ENCODE measurements at regions of chr21 and their contacts with region 1.

Region 1: GRCh38 chr21:27693376-27693775 is 726.5 kb upstream of the ADAMTS5 start:
- DNase-seq: peak; percentile 98
- H3K4me3 ChIP-seq: no peak overlapping the region
- H3K27ac ChIP-seq: peak overlapping the region; percentile 98
- H3K4me1 ChIP-seq: peaks cover 18% of the 10 kb centered on the region
- H3K27me3 ChIP-seq: no peaks in the 10 kb centered on the region
- CTCF ChIP-seq: no peak

Region 2: DNA sequence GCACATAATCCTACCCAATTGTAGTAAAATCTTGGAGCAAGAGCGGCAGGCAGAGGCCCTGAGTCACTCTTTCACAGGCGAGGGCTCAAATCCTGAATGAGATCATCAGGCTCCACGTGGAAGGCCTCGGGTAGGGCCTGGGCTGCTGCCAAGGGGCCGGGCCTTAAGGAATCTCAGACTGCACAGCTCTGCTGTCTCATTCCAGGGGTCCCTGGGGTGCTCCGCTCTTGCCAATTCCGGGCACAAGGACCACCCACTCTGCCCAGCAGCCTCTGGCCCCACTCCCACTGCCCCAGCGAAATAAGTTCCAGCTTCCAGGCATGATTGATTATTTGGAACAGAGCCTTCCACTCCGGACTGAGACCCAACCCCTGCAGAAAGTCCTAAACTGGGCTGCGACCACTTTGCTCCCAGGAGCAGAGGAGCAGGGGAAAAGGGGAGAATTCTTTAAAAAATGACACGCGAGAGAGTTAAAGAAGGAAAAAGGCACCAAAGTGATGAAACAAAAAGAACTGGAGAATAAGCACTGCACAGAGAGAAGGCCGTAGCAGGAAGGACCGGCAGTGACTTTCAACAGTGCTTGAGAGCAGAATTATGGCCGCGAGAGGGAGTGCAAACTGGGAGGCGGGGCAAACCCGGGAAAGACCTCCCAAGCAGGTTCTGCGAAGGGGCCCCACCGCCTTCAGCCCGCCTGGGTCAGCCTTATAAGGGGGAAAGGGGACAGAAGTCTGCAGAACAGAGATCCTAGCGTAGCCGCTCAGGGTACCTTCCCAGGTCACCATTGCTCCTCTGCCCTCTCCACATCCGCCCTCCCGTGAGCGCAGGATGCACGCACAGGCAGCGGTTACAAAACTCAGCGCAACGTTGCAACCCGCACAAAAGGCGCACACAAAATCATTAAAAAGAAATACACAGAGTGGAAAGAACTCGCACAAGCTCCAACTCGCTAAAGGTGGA is 850.1 kb before region 1 on chr21:
- CTCF ChIA-PET with region 1: no interaction called
- dilution Hi-C with region 1: loop called (anchors 5 kb)
- in situ Hi-C with region 1: no loop called
- intact Hi-C with region 1: no loop called
- DNase-seq: peak; percentile 91
- H3K4me3 ChIP-seq: peak overlapping the region; percentile 70 to 85 (median 74)
- H3K27ac ChIP-seq: peak overlapping the region; percentile 80
- H3K4me1 ChIP-seq: peaks cover 27% of the 10 kb centered on the region
- H3K27me3 ChIP-seq: no peaks in the 10 kb centered on the region
- CTCF ChIP-seq: peak in 1 of 2 donors; percentile 29

Region 3: DNA sequence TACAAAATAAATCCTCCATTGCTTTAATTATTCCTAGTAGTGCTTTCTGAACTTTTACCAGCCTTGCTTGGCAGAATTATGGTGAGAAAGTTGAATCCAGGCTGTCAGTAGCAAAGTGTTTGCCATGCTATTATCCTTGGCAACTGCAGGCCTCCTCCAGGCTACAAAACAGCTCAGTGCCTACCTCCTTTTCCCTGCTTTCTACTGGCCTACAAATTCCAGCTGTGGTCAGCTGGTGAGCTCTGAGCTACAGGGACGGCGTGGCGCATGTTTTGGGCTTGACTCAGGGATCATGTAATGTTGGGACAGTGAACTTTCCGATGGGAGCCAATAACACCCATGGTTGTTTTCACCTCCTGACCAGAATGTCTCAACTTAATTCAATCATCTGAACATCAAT is 270.3 kb before region 1 on chr21:
- CTCF ChIA-PET with region 1: no interaction called
- dilution Hi-C with region 1: no loop called
- in situ Hi-C with region 1: no loop called
- intact Hi-C with region 1: loop called (anchors 5 kb)
- DNase-seq: peak; percentile 90
- H3K4me3 ChIP-seq: no peak overlapping the region
- H3K27ac ChIP-seq: peak overlapping the region; percentile 62
- H3K4me1 ChIP-seq: peaks cover 40% of the 10 kb centered on the region
- H3K27me3 ChIP-seq: no peaks in the 10 kb centered on the region
- CTCF ChIP-seq: no peak

Region 4: GRCh38 chr21:27519361-27519760 is 174.0 kb before region 1 on chr21:
- CTCF ChIA-PET with region 1: no interaction called
- dilution Hi-C with region 1: no loop called
- in situ Hi-C with region 1: no loop called
- intact Hi-C with region 1: no loop called
- DNase-seq: peak; percentile 68
- H3K4me3 ChIP-seq: no peak overlapping the region
- H3K27ac ChIP-seq: no peak overlapping the region
- H3K4me1 ChIP-seq: peaks cover 5% of the 10 kb centered on the region
- H3K27me3 ChIP-seq: no peaks in the 10 kb centered on the region
- CTCF ChIP-seq: no peak

Region 5: DNA sequence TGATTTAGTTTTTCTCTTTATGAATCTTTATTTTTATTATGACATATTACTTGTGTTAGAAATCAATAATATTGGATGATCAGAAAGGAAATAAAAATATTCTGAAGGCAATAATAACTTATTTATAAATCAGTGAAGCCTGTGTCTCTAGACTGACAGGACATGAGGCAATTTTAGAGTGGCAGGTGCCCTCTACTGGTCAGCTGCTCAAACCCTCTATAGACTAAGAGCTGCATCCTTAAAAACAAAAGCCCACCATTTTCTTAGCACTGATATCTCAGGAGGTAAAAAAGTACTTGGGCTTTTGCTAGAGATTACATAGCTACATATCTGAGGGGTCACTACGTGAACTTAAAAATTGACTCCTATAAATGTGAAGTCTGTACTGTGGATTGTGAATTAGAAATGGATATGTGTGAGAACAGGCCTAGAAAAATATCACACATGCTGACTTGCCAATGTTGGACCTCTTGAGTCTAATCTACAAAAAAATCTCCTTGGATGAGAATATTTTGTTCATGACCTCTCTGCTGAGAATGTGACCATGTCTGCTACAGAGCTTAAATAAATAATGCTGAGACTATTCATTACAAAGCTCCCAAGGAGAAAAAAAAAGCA is 128.6 kb before region 1 on chr21:
- CTCF ChIA-PET with region 1: no interaction called
- dilution Hi-C with region 1: no loop called
- in situ Hi-C with region 1: loop called in 1 of 2 experiments (anchors 10 kb)
- intact Hi-C with region 1: no loop called
- DNase-seq: peak; percentile 42
- H3K4me3 ChIP-seq: no peak overlapping the region
- H3K27ac ChIP-seq: no peak overlapping the region
- H3K4me1 ChIP-seq: peaks cover 12% of the 10 kb centered on the region
- H3K27me3 ChIP-seq: no peaks in the 10 kb centered on the region
- CTCF ChIP-seq: peak; percentile 62 to 86

Region 6: DNA sequence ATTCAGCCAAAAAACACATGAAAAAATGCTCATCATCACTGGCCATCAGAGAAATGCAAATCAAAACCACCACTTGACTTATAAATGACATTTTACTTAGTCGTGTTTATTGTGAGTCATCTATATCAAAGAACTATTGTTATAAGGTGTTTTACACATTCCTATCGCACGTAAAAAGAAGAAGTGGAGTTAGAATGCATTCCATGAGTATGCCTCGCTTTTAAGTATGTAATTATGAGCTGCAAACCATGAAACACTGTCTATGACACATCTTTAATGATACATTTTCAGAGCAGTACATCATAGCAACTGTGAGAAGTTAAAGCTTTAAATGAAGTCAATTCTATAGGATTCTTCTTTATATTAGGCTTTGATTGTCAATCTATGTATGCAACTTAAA is 112.2 kb before region 1 on chr21:
- CTCF ChIA-PET with region 1: interaction called, 8 read pairs
- dilution Hi-C with region 1: no loop called
- in situ Hi-C with region 1: no loop called
- intact Hi-C with region 1: loop called (anchors 1 kb)
- DNase-seq: peak; percentile 92
- H3K4me3 ChIP-seq: no peak overlapping the region
- H3K27ac ChIP-seq: peak overlapping the region; percentile 89
- H3K4me1 ChIP-seq: peaks cover 22% of the 10 kb centered on the region
- H3K27me3 ChIP-seq: no peaks in the 10 kb centered on the region
- CTCF ChIP-seq: no peak

Region 7: DNA sequence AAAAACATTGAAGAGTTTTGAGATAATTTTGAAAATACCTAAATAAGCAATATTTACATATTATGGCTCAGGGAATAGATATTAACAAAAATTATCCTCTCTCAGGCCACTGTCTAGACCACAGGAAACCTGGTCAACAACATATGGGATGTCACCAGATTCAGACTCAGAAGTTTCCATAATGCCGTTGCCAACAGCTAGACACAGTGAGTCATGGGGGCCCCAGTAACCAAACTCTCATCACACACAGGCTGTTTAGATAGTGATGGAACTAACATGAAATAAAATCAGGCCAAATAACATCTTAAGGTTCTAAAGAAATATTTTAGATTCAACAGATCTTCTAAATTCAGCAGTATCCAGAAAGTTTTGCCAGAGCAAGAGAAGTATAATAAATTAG is 44.8 kb before region 1 on chr21:
- CTCF ChIA-PET with region 1: no interaction called
- dilution Hi-C with region 1: no loop called
- in situ Hi-C with region 1: no loop called
- intact Hi-C with region 1: loop called (anchors 1 kb)
- DNase-seq: peak; percentile 85
- H3K4me3 ChIP-seq: no peak overlapping the region
- H3K27ac ChIP-seq: peak overlapping the region; percentile 98
- H3K4me1 ChIP-seq: peaks cover 47% of the 10 kb centered on the region
- H3K27me3 ChIP-seq: no peaks in the 10 kb centered on the region
- CTCF ChIP-seq: no peak

Region 8: DNA sequence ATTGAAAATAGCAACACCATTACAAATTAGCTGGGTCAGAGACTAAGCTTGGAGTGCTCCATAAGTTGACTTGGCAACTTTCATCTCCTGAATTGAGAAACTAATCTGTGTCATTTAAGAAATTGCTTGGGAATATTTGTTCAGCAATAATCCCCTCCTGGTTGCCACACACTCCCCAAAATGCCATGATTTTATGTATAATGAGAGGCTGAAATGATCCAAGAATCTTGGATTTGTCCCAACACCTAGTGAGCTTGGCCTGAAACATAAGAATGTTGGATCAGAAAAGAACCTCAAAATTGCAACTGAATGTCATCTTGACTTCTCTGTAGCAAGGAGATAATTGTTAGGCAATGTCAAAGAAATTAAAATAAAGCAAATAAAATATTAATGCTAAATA is 79.4 kb after region 1 on chr21:
- CTCF ChIA-PET with region 1: no interaction called
- dilution Hi-C with region 1: no loop called
- in situ Hi-C with region 1: no loop called
- intact Hi-C with region 1: no loop called
- DNase-seq: no peak
- H3K4me3 ChIP-seq: no peak overlapping the region
- H3K27ac ChIP-seq: no peak overlapping the region
- H3K4me1 ChIP-seq: no peaks in the 10 kb centered on the region
- H3K27me3 ChIP-seq: no peaks in the 10 kb centered on the region
- CTCF ChIP-seq: no peak